T-cell (primary cell): ENCODE measurements at regions of chr1 and their contacts with region 1.

Region 1: DNA sequence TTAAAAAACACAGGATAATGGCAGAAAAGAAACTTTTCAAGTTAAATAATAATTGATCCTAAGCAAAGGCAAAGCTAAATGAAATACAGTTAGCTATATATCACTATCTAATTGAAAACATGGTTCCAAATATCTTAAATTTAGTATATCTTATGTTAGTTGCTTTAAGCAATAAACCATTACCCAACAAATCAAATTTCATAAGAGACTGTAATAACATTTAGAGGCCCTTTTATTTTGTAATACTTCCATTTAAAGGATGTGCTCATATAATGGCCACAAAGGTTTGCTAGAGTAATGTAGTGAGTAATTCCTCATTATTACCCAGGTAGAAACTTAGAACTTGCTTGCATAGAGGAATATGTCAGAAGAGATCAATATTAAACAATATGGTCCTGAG is 32.3 kb downstream of the RPL5 start:
- DNase-seq: no peak
- ATAC-seq: no peak
- H3K4me3 ChIP-seq: no peak overlapping the region
- H3K4me3 Mint-ChIP-seq: no peak overlapping the region
- H3K27ac ChIP-seq: no peak overlapping the region
- H3K27ac Mint-ChIP-seq: no peak overlapping the region
- H3K4me1 ChIP-seq: peaks cover 7% of the 10 kb centered on the region in 2 experiments
- H3K4me1 Mint-ChIP-seq: peaks cover 6 to 13% (median 6%) of the 10 kb centered on the region in 3 donors
- H3K27me3 ChIP-seq: no peaks in the 10 kb centered on the region
- H3K27me3 Mint-ChIP-seq: no peaks in the 10 kb centered on the region

Region 2: DNA sequence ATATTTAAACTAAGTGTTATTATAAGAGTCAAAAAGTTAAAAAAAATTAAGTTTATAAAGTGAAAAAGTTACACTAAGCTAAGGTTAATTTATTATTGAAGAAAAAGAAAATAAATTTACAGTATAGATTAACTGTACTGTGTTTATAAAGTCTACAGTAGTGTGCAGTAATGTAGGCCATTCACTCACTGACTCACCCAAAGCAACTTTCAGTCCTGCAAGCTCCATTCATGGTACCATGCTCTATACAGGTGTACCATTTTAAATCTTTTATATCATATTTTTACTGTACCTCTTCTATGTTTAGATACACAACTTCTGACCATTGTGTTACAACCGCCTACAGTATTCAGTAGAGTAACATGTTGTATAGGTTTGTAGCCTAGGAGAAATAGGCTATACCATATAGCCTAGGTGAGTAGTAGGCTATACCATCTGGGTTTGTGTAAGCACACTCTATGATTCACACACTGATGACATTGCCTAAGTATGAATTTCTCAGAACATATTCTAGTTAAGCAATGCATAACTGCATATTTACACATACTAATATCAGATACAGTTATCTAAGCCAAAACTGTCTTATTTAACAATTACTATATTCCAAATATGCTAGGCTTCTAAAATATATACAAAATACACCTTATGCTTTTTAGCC is 296.8 kb before region 1 on chr1:
- CTCF ChIA-PET with region 1: no interaction called
- POLR2A ChIA-PET with region 1: no interaction called
- DNase-seq: no peak
- ATAC-seq: no peak
- H3K4me3 ChIP-seq: no peak overlapping the region
- H3K4me3 Mint-ChIP-seq: no peak overlapping the region
- H3K27ac ChIP-seq: no peak overlapping the region
- H3K27ac Mint-ChIP-seq: no peak overlapping the region
- H3K4me1 ChIP-seq: no peaks in the 10 kb centered on the region
- H3K4me1 Mint-ChIP-seq: peaks cover 0 to 5% (median 4%) of the 10 kb centered on the region in 3 donors
- H3K27me3 ChIP-seq: no peaks in the 10 kb centered on the region
- H3K27me3 Mint-ChIP-seq: no peaks in the 10 kb centered on the region

Region 3: GRCh38 chr1:92882819-92883218 is 18.7 kb after region 1 on chr1:
- CTCF ChIA-PET with region 1: interaction called, 5 to 10 read pairs
- POLR2A ChIA-PET with region 1: interaction called, 5 to 10 read pairs
- DNase-seq: peak in 33 of 35 experiments; percentile 19 to 73 (median 43)
- ATAC-seq: peak; percentile 94 to 98 (median 96)
- H3K4me3 ChIP-seq: no peak overlapping the region
- H3K4me3 Mint-ChIP-seq: peak overlapping the region; percentile 14 to 53 (median 39)
- H3K27ac ChIP-seq: peak overlapping the region; percentile 60
- H3K27ac Mint-ChIP-seq: peak overlapping the region; percentile 94 to 97
- H3K4me1 ChIP-seq: peaks cover 23 to 29% of the 10 kb centered on the region in 2 experiments
- H3K4me1 Mint-ChIP-seq: peaks cover 47 to 53% (median 52%) of the 10 kb centered on the region in 3 donors
- H3K27me3 ChIP-seq: no peaks in the 10 kb centered on the region
- H3K27me3 Mint-ChIP-seq: no peaks in the 10 kb centered on the region

Region 4: DNA sequence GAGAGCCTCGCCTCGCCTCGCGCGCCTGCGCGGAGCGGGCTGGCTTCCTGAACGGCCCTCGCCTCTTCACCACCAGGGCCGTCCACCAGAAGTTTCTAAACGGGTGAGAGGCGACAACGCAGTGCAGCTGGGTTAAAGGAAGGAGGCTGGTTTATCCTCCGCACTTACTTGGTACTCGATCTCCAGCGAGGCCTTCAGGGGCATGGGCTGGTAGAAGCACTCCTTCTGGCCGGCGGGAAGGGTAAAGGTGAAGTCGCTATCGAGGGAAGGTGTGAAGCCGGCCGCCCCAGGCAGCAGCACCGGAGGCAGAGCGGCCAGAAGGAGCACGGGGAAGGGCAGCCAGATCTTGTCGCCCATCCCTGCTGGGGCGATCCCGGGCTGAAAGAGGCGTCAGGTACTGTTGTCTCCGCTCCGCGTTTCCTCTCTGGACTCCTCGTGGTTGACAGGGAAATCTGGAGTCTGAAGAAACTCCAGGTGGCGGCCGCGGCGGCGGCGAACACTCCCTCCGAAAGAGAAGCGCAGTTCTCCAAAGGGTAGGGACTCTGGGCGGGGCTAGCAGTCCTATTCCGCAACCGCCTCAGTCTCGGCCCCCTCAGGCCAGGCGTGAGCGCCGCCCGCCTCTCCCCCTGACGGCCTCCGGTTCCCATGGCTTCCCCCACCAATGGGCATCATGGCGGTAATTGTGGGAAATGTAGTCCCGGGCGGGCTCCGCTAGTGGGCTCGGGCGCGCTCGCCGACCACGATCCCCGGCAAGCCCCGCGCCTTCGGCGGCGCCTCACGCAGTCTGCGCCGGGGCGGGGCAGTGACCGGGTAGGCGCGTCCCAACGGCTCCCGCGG is 316.0 kb after region 1 on chr1 and contains the start of gene TMED5:
- CTCF ChIA-PET with region 1: no interaction called
- POLR2A ChIA-PET with region 1: no interaction called
- DNase-seq: peak; percentile 90 to 98 (median 95)
- ATAC-seq: peak; percentile 83 to 89 (median 88)
- H3K4me3 ChIP-seq: peak within 1 kb of the TSS; percentile 82 to 100
- H3K4me3 Mint-ChIP-seq: peak within 1 kb of the TSS; percentile 88 to 94 (median 92)
- H3K27ac ChIP-seq: peak within 1 kb of the TSS; percentile 99
- H3K27ac Mint-ChIP-seq: peak within 1 kb of the TSS; percentile 95 to 96
- H3K4me1 ChIP-seq: peaks cover 20 to 31% of the 10 kb centered on the region in 2 experiments
- H3K4me1 Mint-ChIP-seq: peaks cover 44 to 59% (median 57%) of the 10 kb centered on the region in 3 donors
- H3K27me3 ChIP-seq: no peaks in the 10 kb centered on the region
- H3K27me3 Mint-ChIP-seq: no peaks in the 10 kb centered on the region
- total RNA-seq, gene TMED5: 40.9 to 47.6 (median 44.8) TPM